Testis (tissue), 5 donors: ENCODE measurements at regions of chr7 and their contacts with region 1.

Region 1: GRCh38 chr7:332646-333392 is 42.8 kb downstream of the FOXL3 start:
- DNase-seq: peak; percentile 89
- H3K4me3 ChIP-seq: peak overlapping the region; percentile 45 to 61
- H3K27ac ChIP-seq: no peak overlapping the region
- H3K4me1 ChIP-seq: peaks cover 9% of the 10 kb centered on the region
- H3K27me3 ChIP-seq: no peaks in the 10 kb centered on the region
- CTCF ChIP-seq: peak; percentile 85 to 94 (median 88)
- POLR2A ChIP-seq: no peak

Region 2: GRCh38 chr7:519484-520390 is 186.9 kb after region 1 on chr7 and contains the start of gene PDGFA:
- intact Hi-C with region 1: loop called (anchors 10 kb)
- DNase-seq: no peak
- H3K4me3 ChIP-seq: peak within 1 kb of the TSS; percentile 60 to 72
- H3K27ac ChIP-seq: peak within 1 kb of the TSS; percentile 68 to 79
- H3K4me1 ChIP-seq: peaks cover 44% of the 10 kb centered on the region
- H3K27me3 ChIP-seq: no peaks in the 10 kb centered on the region
- CTCF ChIP-seq: peak in 2 of 3 experiments; percentile 10 to 34
- POLR2A ChIP-seq: no peak
- total RNA-seq, gene PDGFA: 13.8 TPM

Region 3: DNA sequence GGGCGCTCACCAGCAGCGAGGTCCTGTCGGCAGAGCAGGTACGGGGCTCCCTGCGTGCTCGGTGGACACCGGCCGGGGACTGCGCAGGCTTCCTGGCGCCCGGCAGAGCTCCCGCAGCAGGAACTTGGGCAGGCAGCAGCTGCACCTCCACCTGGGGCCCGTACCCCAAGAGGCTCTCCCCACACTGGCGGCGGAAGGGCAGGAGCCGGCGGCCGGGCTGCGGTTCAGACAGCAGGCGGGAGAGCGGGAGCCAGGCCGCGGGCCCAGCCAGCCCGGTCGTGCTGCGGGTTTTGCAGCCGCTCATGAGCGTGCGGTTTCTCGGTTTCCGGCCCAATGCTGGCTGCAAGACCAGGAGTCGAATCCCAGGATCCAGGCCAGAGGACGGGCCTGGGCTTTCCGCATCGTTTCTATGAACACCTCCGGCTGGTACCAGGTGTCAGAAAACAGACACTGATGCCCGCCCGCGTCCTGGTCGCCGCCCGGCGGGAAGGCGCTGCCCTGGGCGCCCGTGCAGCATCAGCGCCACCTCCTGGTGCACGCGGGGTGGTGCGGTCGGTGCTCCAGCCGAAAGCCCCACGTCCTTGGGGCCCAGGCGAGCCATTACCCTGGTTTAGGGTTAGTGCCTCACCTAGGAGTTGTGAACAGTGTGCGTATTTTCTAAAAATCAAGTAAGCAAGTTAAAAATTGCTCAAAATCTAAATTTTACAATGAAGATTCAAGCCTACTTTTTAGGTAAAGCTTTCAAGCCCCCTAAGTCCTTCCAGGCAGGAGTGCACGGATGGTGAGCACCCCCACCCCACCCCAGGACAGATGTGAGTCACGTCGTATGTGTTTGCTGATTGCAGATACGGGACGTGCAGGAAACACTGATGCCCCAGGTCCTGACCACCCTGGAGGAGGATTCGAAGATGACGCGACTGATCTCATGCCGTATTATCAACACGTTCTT is 441.6 kb after region 1 on chr7:
- intact Hi-C with region 1: loop called (anchors 5 kb)
- DNase-seq: peak; percentile 73
- H3K4me3 ChIP-seq: no peak overlapping the region
- H3K27ac ChIP-seq: no peak overlapping the region
- H3K4me1 ChIP-seq: peaks cover 21% of the 10 kb centered on the region
- H3K27me3 ChIP-seq: no peaks in the 10 kb centered on the region
- CTCF ChIP-seq: peak; percentile 77 to 94 (median 93)
- POLR2A ChIP-seq: no peak